Activated T-helper 1 cell treated with anti-CD3 and anti-CD28 coated beads, Interleukin-12 subunit alpha, Interleukin-12 subunit beta, Interleukin-2, Interleukin-4 antibody, amounts not matched to agents 30 ng/mL and 10 ng/mL and 1 ng/mL, durations not matched to agents 14 hours and 24 hours and 36 hours (primary cell): ENCODE measurements at regions of chr17 and their contacts with region 1.

Region 1: GRCh38 chr17:27760069-27760885 is 40.1 kb downstream of the NOS2 start:
- DNase-seq: peak; percentile 48
- H3K4me3 Mint-ChIP-seq: no peak overlapping the region
- H3K27ac Mint-ChIP-seq: no peak overlapping the region
- H3K4me1 Mint-ChIP-seq: no peaks in the 10 kb centered on the region
- H3K27me3 Mint-ChIP-seq: no peaks in the 10 kb centered on the region

Region 2: DNA sequence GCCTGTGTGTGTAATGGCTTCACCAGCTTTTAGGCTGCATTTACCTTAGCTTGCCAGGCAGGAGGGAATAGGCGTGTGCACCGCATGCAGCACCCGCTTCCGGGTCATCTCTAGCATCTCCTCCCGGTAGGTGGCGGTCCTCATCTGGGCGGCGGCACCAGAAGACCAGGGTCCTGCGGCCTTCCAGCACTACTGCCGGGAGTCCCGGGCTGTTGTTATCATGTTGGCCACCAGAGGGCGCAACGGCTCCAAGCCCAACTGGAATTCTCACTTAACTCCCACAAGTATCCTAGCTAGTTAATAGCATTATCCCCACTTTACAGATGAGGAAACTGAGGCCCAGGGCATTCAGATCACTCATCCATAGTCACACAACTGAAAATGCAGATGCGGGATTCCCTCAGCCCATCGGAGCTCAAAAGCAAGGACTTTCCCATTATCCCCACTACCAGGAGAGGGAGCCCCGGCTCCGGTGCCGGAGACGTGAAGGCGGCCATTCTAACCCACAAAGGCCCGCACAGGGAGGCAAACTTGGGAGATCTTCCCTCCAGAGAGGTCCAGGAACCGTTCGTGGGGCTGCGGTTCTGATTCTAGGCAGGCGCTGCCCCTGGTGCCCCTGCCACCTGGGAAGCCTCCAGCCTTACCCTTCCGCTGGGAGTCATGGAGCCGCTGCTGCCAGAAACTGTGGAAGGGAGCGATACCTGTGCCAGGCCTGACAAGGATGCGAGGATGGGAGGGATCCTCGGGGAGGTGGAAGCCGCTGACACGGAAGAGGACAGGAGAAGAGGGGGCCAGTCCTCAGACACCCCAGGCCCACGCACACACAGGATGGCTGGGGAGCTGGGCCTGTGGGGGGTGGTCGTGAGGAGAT is 105.4 kb before region 1 on chr17:
- intact Hi-C with region 1: loop called (anchors 1 kb)
- DNase-seq: peak; percentile 49
- H3K4me3 Mint-ChIP-seq: no peak overlapping the region
- H3K27ac Mint-ChIP-seq: no peak overlapping the region
- H3K4me1 Mint-ChIP-seq: peaks cover 13% of the 10 kb centered on the region
- H3K27me3 Mint-ChIP-seq: no peaks in the 10 kb centered on the region

Region 3: DNA sequence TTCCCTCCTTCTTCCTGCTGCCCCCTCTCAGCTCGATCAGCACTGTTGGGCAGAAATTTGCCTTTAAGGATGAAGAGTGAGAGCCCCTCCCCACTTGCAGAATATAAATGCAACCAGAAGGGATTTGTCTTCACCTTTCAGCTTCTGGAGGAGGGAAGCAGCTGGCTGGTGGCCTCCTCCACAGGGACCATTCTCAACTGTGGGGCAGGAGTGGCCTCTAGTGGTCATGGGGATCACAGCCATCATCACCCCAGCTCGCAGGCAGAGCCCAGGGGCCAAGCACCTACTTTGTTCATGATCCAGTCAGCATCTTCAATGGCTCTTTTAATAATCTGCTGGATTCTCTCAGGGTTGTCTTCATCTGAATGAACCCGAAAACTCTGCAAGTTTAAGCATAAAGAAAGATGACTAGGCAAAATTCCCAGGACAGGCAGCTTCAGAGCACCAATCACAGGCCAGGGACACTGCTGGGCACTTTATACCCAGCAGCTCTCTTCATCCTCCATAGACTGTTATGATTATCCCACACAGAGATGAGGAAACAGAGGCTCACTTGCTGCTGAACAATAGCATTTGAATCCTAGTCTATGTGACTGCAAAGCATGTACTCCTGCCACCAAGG is 119.8 kb after region 1 on chr17:
- intact Hi-C with region 1: loop called (anchors 1 kb)
- DNase-seq: peak; percentile 61
- H3K4me3 Mint-ChIP-seq: no peak overlapping the region
- H3K27ac Mint-ChIP-seq: no peak overlapping the region
- H3K4me1 Mint-ChIP-seq: peaks cover 26% of the 10 kb centered on the region
- H3K27me3 Mint-ChIP-seq: peaks cover 2% of the 10 kb centered on the region

Region 4: GRCh38 chr17:28252436-28252835 is 492.2 kb after region 1 on chr17:
- intact Hi-C with region 1: loop called (anchors 1 kb)
- DNase-seq: no peak
- H3K4me3 Mint-ChIP-seq: no peak overlapping the region
- H3K27ac Mint-ChIP-seq: no peak overlapping the region
- H3K4me1 Mint-ChIP-seq: peaks cover 8% of the 10 kb centered on the region
- H3K27me3 Mint-ChIP-seq: peaks cover 14% of the 10 kb centered on the region